ENCODE measurements at regions of chr4 and their contacts with region 1.

Region 1: GRCh38 chr4:82900331-82901128 is at the start of gene THAP9:
- DNase-seq: peak; percentile 98 to 100 (median 99)
- H3K4me3 ChIP-seq: peak within 1 kb of the TSS; percentile 92 to 99
- H3K4me3 Mint-ChIP-seq: no peak within 1 kb of the TSS
- H3K27ac ChIP-seq: peak within 1 kb of the TSS; percentile 98
- H3K27ac Mint-ChIP-seq: no peak within 1 kb of the TSS
- H3K4me1 ChIP-seq: peaks cover 47% of the 10 kb centered on the region
- H3K4me1 Mint-ChIP-seq: peaks cover 10 to 20% (median 16%) of the 10 kb centered on the region in 4 donors
- H3K27me3 ChIP-seq: no peaks in the 10 kb centered on the region
- H3K27me3 Mint-ChIP-seq: no peaks in the 10 kb centered on the region
- total RNA-seq, gene THAP9: 2.7 to 3.7 TPM

Region 2: GRCh38 chr4:82851885-82852750 is 48.4 kb before region 1 on chr4:
- CTCF ChIA-PET with region 1: interaction called, 29 read pairs
- POLR2A ChIA-PET with region 1: interaction called, 5 read pairs
- intact Hi-C with region 1: loop called (anchors 1 kb)
- DNase-seq: peak in 4 of 5 donors; percentile 21 to 40 (median 30)
- H3K4me3 ChIP-seq: no peak overlapping the region
- H3K4me3 Mint-ChIP-seq: no peak overlapping the region
- H3K27ac ChIP-seq: no peak overlapping the region
- H3K27ac Mint-ChIP-seq: peak overlapping the region in 4 of 7 donors; percentile 60 to 75 (median 62)
- H3K4me1 ChIP-seq: no peaks in the 10 kb centered on the region
- H3K4me1 Mint-ChIP-seq: peaks cover 0 to 3% (median 0%) of the 10 kb centered on the region in 4 donors
- H3K27me3 ChIP-seq: no peaks in the 10 kb centered on the region
- H3K27me3 Mint-ChIP-seq: no peaks in the 10 kb centered on the region

Region 3: DNA sequence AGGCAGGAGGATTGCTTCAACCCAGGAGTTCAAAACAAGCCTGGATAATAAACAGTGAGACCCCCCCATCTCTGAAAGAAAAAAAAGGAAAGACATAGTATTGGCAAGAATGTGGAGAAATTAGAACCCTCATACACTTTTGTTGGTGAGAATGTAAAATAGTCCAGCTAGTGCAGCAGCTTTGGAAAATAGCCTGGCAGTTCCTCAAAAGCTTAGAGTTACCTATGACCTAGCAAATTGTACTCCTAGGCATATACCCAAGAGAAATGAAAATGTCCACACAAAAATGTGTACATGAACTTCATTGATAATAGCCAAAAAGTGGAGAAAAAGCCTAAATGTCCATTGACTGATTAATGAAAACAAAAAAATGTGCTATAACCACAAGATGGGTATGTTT is 21.3 kb after region 1 on chr4:
- CTCF ChIA-PET with region 1: no interaction called
- POLR2A ChIA-PET with region 1: no interaction called
- intact Hi-C with region 1: no loop called
- DNase-seq: no peak
- H3K4me3 ChIP-seq: no peak overlapping the region
- H3K4me3 Mint-ChIP-seq: no peak overlapping the region
- H3K27ac ChIP-seq: no peak overlapping the region
- H3K27ac Mint-ChIP-seq: peak overlapping the region in 1 of 7 donors; percentile 70
- H3K4me1 ChIP-seq: no peaks in the 10 kb centered on the region
- H3K4me1 Mint-ChIP-seq: no peaks in the 10 kb centered on the region
- H3K27me3 ChIP-seq: no peaks in the 10 kb centered on the region
- H3K27me3 Mint-ChIP-seq: no peaks in the 10 kb centered on the region

Region 4: GRCh38 chr4:82975792-82976191 is 75.3 kb after region 1 on chr4:
- CTCF ChIA-PET with region 1: no interaction called
- POLR2A ChIA-PET with region 1: no interaction called
- intact Hi-C with region 1: no loop called
- DNase-seq: no peak
- H3K4me3 ChIP-seq: no peak overlapping the region
- H3K4me3 Mint-ChIP-seq: no peak overlapping the region
- H3K27ac ChIP-seq: no peak overlapping the region
- H3K27ac Mint-ChIP-seq: no peak overlapping the region
- H3K4me1 ChIP-seq: no peaks in the 10 kb centered on the region
- H3K4me1 Mint-ChIP-seq: peaks cover 0 to 5% (median 0%) of the 10 kb centered on the region in 4 donors
- H3K27me3 ChIP-seq: no peaks in the 10 kb centered on the region
- H3K27me3 Mint-ChIP-seq: no peaks in the 10 kb centered on the region

Region 5: DNA sequence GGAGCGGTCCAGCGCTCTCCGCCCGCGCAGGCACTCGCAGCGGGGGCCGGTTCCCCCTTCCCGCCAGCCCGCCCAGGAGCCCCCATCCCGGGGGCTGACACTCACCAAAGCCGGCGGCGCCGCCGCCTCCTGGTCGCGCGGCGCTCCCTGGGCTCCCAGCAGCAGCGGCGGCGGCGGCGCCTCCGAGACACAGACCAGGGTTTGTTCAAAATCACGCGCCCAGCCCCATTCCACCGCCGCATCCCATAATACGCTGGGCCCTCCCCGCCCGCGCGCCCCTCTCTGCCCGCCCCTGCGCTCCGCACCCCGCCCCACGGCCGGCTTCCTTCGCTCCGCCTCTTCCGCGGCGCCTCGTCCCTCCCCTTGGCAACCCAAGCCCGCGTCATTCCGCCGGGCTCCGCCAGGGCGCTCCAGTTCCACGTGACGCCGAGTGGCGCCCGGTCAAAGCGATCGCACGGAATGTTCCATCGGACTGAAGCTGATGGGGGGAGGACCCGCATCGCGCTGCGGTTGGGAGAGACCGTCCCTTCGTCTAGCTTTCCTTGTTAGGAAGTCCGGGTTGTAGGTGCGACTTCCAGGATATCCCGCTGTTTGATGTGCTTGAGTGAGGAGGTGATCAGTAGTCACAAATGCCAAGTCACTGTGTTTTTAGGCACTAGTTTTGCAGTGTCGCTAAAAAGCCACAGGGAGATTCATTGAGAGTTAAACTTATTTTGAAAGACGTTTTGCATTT is 112.3 kb after region 1 on chr4:
- CTCF ChIA-PET with region 1: interaction called, 11 read pairs
- POLR2A ChIA-PET with region 1: interaction called, 42 read pairs
- intact Hi-C with region 1: loop called (anchors 1 kb)
- DNase-seq: peak; percentile 96 to 99 (median 97)
- H3K4me3 ChIP-seq: peak overlapping the region; percentile 88 to 98
- H3K4me3 Mint-ChIP-seq: peak overlapping the region; percentile 91 to 97 (median 95)
- H3K27ac ChIP-seq: peak overlapping the region; percentile 89
- H3K27ac Mint-ChIP-seq: peak overlapping the region; percentile 87 to 97 (median 94)
- H3K4me1 ChIP-seq: peaks cover 43% of the 10 kb centered on the region
- H3K4me1 Mint-ChIP-seq: peaks cover 33 to 52% (median 39%) of the 10 kb centered on the region in 4 donors
- H3K27me3 ChIP-seq: no peaks in the 10 kb centered on the region
- H3K27me3 Mint-ChIP-seq: no peaks in the 10 kb centered on the region

Region 6: DNA sequence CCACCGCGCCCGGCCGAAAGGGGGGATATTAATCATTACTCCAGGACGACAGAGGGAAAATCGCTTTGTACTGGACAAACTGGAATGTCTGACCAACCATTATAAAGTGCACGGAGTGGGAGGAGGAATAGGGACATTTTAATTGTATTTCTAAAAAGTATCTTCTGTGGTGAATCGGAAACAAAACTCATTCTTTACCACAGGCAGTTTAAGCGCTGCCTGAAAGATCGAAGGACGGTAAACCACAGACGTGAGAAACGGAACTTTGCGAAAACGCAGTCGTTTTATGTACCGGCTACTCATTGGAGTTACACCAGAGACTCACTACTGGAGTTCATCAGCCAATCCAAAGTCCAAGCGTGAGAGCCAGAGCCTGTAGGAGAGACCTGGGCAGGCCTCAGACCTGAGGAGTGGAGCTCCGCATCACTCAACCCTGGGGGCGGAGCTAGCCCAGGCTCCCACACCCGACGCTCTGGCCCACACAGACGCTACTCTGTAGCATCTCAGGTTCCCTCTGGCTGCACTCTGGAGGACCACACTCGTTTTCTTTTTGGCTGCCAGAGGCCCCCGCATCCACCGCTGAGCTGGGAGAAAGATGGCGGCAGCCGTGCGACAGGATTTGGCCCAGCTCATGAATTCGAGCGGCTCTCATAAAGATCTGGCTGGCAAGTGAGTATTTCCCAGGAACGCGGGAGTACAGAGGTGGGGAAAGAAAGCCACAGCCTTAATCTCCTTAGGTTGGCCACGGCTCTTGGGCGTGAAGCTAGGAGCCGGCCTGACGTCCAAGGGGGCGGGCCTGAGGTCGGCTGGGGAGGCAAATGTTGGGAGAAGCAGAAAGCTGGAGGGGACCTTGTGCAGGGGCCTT is 134.3 kb after region 1 on chr4 and contains the start of gene COPS4:
- CTCF ChIA-PET with region 1: interaction called, 14 read pairs
- POLR2A ChIA-PET with region 1: interaction called, 34 read pairs
- intact Hi-C with region 1: loop called (anchors 1 kb)
- DNase-seq: peak; percentile 93 to 99 (median 98)
- H3K4me3 ChIP-seq: peak within 1 kb of the TSS; percentile 76 to 84
- H3K4me3 Mint-ChIP-seq: peak within 1 kb of the TSS; percentile 98 to 100 (median 100)
- H3K27ac ChIP-seq: peak within 1 kb of the TSS; percentile 85
- H3K27ac Mint-ChIP-seq: peak within 1 kb of the TSS; percentile 94 to 100 (median 99)
- H3K4me1 ChIP-seq: peaks cover 25% of the 10 kb centered on the region
- H3K4me1 Mint-ChIP-seq: peaks cover 15 to 41% (median 25%) of the 10 kb centered on the region in 4 donors
- H3K27me3 ChIP-seq: no peaks in the 10 kb centered on the region
- H3K27me3 Mint-ChIP-seq: no peaks in the 10 kb centered on the region
- total RNA-seq, gene COPS4: 24.6 to 26.1 TPM

Region 7: GRCh38 chr4:84417997-84418709 is 1517.6 kb after region 1 on chr4:
- CTCF ChIA-PET with region 1: no interaction called
- POLR2A ChIA-PET with region 1: no interaction called
- intact Hi-C with region 1: no loop called
- DNase-seq: no peak
- H3K4me3 ChIP-seq: no peak overlapping the region
- H3K4me3 Mint-ChIP-seq: no peak overlapping the region
- H3K27ac ChIP-seq: no peak overlapping the region
- H3K27ac Mint-ChIP-seq: no peak overlapping the region
- H3K4me1 ChIP-seq: no peaks in the 10 kb centered on the region
- H3K4me1 Mint-ChIP-seq: no peaks in the 10 kb centered on the region
- H3K27me3 ChIP-seq: no peaks in the 10 kb centered on the region
- H3K27me3 Mint-ChIP-seq: peaks cover 1% of the 10 kb centered on the region in 2 donors

Region 8: GRCh38 chr4:84582302-84583000 is 1681.9 kb after region 1 on chr4:
- CTCF ChIA-PET with region 1: no interaction called
- POLR2A ChIA-PET with region 1: no interaction called
- intact Hi-C with region 1: loop called (anchors 5 kb)
- DNase-seq: peak; percentile 88 to 92 (median 90)
- H3K4me3 ChIP-seq: peak overlapping the region in 1 of 2 donors; percentile 51
- H3K4me3 Mint-ChIP-seq: peak overlapping the region; percentile 66 to 87 (median 82)
- H3K27ac ChIP-seq: peak overlapping the region; percentile 31
- H3K27ac Mint-ChIP-seq: peak overlapping the region; percentile 62 to 86 (median 74)
- H3K4me1 ChIP-seq: peaks cover 19% of the 10 kb centered on the region
- H3K4me1 Mint-ChIP-seq: peaks cover 9 to 18% (median 15%) of the 10 kb centered on the region in 4 donors
- H3K27me3 ChIP-seq: peaks cover 8% of the 10 kb centered on the region
- H3K27me3 Mint-ChIP-seq: peaks cover 16 to 32% of the 10 kb centered on the region in 2 donors